Activated CD4-positive, alpha-beta T cell treated with anti-CD3 and anti-CD28 coated beads for 36 hours (primary cell): ENCODE measurements at regions of chr12 and their contacts with region 1.

Region 1: DNA sequence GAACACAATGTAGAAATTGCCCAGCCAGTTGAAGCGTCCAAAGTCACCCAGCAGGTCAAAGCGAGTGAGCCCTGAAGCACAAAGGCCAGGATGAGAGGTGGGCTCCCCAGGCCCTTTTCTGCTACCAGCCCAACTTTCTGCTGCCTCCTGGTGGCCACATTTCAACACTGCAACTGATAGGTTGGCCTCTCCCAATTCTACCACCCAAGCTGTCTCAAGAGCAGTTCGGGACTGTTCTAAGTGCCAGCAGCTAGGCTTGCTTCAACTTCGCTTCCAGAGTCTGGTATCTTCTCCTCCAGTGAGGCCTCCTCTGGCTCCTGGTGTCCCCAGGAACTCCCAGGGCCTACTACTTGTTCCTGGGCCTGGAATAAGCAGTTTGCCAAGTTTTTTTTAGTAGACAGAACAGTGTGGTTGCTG is 3.4 kb upstream of the DHH start:
- DNase-seq: peak; percentile 80
- ATAC-seq: peak; percentile 76
- H3K4me3 Mint-ChIP-seq: no peak overlapping the region
- H3K27ac Mint-ChIP-seq: no peak overlapping the region
- H3K4me1 Mint-ChIP-seq: peaks cover 8% of the 10 kb centered on the region
- H3K27me3 Mint-ChIP-seq: peaks cover 19% of the 10 kb centered on the region

Region 2: GRCh38 chr12:49060237-49061156 is 37.5 kb before region 1 on chr12 and contains the start of gene KMT2D:
- CTCF ChIA-PET with region 1: interaction called, 124 read pairs
- POLR2A ChIA-PET with region 1: no interaction called
- intact Hi-C with region 1: loop called (anchors 1 to 2 kb)
- DNase-seq: peak; percentile 94
- ATAC-seq: peak; percentile 75
- H3K4me3 Mint-ChIP-seq: peak within 1 kb of the TSS; percentile 98
- H3K27ac Mint-ChIP-seq: peak within 1 kb of the TSS; percentile 95
- H3K4me1 Mint-ChIP-seq: peaks cover 45% of the 10 kb centered on the region
- H3K27me3 Mint-ChIP-seq: no peaks in the 10 kb centered on the region
- total RNA-seq, gene KMT2D: 48.3 to 58.2 TPM

Region 3: GRCh38 chr12:49069507-49070346 is 28.3 kb before region 1 on chr12 and contains the start of gene RHEBL1:
- CTCF ChIA-PET with region 1: interaction called, 124 read pairs
- POLR2A ChIA-PET with region 1: no interaction called
- intact Hi-C with region 1: loop called (anchors 1 to 2 kb)
- DNase-seq: peak; percentile 100
- ATAC-seq: peak; percentile 100
- H3K4me3 Mint-ChIP-seq: peak within 1 kb of the TSS; percentile 94
- H3K27ac Mint-ChIP-seq: peak within 1 kb of the TSS; percentile 91
- H3K4me1 Mint-ChIP-seq: peaks cover 15% of the 10 kb centered on the region
- H3K27me3 Mint-ChIP-seq: no peaks in the 10 kb centered on the region
- total RNA-seq, gene RHEBL1: 6.7 to 13.3 TPM

Region 4: GRCh38 chr12:49079793-49080192 is 18.2 kb before region 1 on chr12:
- CTCF ChIA-PET with region 1: interaction called, 96 read pairs
- POLR2A ChIA-PET with region 1: no interaction called
- intact Hi-C with region 1: no loop called
- DNase-seq: no peak
- ATAC-seq: no peak
- H3K4me3 Mint-ChIP-seq: no peak overlapping the region
- H3K27ac Mint-ChIP-seq: no peak overlapping the region
- H3K4me1 Mint-ChIP-seq: no peaks in the 10 kb centered on the region
- H3K27me3 Mint-ChIP-seq: no peaks in the 10 kb centered on the region

Region 5: DNA sequence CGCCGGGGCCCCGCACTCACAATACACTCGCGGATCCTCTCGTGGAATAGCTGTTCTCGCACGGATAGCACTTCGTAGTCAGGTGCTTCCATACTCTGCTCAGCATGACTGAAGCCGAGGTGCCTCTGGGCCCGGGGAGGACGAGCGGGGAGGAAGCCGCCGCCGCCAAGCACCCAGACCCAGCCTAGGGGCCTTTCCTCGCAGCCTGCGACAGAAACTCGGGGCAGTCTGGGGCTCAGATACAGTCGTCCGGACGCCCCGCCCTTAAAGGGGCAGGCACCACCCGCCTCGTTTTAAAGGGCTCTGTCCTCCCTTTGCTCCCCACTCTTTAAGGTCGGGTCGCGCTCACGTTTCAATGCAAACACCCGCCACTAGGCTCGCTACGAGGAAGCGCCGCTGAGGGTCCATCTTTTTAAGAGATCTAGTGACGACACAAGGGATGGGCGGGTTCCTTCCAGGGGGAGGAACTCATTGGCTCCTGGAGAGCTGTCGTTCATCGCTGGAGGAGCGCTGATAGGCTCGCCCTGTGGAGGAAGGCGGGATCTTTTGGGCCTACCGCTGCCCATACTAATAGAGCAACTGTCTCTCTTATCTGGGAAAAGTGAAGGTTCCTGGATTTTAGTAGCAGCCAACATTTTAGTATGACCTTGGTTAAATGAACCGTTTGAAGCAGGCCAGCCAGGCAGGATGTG is 12.6 kb after region 1 on chr12 and contains the start of gene LMBR1L:
- CTCF ChIA-PET with region 1: interaction called, 49 read pairs
- POLR2A ChIA-PET with region 1: no interaction called
- intact Hi-C with region 1: no loop called
- DNase-seq: peak; percentile 97
- ATAC-seq: peak; percentile 98
- H3K4me3 Mint-ChIP-seq: peak within 1 kb of the TSS; percentile 96
- H3K27ac Mint-ChIP-seq: peak within 1 kb of the TSS; percentile 98
- H3K4me1 Mint-ChIP-seq: peaks cover 29% of the 10 kb centered on the region
- H3K27me3 Mint-ChIP-seq: no peaks in the 10 kb centered on the region
- total RNA-seq, gene LMBR1L: 45.0 to 48.0 TPM

Region 6: GRCh38 chr12:50314629-50315312 is 1216.7 kb after region 1 on chr12:
- CTCF ChIA-PET with region 1: no interaction called
- POLR2A ChIA-PET with region 1: no interaction called
- intact Hi-C with region 1: no loop called
- DNase-seq: no peak
- ATAC-seq: no peak
- H3K4me3 Mint-ChIP-seq: no peak overlapping the region
- H3K27ac Mint-ChIP-seq: no peak overlapping the region
- H3K4me1 Mint-ChIP-seq: peaks cover 7% of the 10 kb centered on the region
- H3K27me3 Mint-ChIP-seq: no peaks in the 10 kb centered on the region